ENCODE measurements at regions of chr9 and their contacts with region 1.

Region 1: DNA sequence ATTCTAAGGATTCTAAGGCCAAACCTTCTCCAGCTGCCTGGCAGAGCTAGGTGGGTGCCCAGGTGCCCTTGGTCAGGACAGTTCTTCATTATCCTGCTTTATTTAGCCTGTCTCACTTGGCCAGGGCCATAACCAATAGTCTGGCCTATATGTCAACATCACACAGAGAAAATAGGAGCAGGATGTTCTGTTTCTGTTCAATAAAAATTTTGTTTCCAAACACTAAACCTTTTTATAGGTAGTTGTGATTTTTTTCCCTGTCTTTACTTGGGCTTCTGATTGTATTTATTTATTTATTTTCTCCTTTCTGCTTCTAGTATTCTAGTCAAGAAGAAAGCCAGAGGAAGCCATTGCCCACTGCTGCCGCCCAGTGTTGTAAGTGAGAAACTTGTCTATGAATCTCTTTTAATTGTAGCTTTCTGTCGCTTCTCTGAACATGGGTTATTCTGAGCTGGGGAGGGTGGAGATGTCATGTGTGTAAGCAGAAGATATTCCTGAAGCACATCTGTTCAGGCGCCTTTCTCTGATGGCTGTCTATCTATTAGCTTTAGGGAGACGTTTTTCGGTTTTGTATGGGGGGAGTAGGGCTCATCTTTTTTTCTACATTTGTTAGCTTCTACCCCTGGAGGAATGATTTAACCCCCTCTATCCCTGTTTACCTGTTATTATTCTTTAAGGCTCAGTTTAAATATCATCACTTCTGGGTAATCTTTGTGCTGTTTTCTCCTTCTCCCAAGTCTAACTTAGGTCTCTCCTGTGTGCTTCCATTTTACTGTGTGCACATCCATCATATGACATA is 97.1 kb downstream of the UNC13B start:
- DNase-seq: peak; percentile 64
- ATAC-seq: peak; percentile 58
- H3K4me3 Mint-ChIP-seq: no peak overlapping the region
- H3K27ac Mint-ChIP-seq: no peak overlapping the region
- H3K4me1 Mint-ChIP-seq: peaks cover 12% of the 10 kb centered on the region
- H3K27me3 Mint-ChIP-seq: no peaks in the 10 kb centered on the region
- CTCF ChIP-seq: peak; percentile 29; the same call in 1 of the 2 replicates

Region 2: GRCh38 chr9:35026671-35027070 is 232.2 kb before region 1 on chr9:
- CTCF ChIA-PET with region 1: no interaction called
- POLR2A ChIA-PET with region 1: no interaction called
- DNase-seq: no peak
- ATAC-seq: no peak; the same call in 1 of the 2 replicates
- H3K4me3 Mint-ChIP-seq: no peak overlapping the region
- H3K27ac Mint-ChIP-seq: peak overlapping the region; percentile 72
- H3K4me1 Mint-ChIP-seq: peaks cover 37% of the 10 kb centered on the region
- H3K27me3 Mint-ChIP-seq: peaks cover 13% of the 10 kb centered on the region
- CTCF ChIP-seq: no peak

Region 3: GRCh38 chr9:35161713-35162604 is 96.9 kb before region 1 on chr9 and contains the start of gene UNC13B:
- CTCF ChIA-PET with region 1: interaction called, 20 read pairs
- POLR2A ChIA-PET with region 1: interaction called, 3 read pairs
- DNase-seq: peak; percentile 94
- ATAC-seq: peak; percentile 94
- H3K4me3 Mint-ChIP-seq: peak within 1 kb of the TSS; percentile 96
- H3K27ac Mint-ChIP-seq: peak within 1 kb of the TSS; percentile 99
- H3K4me1 Mint-ChIP-seq: peaks cover 42% of the 10 kb centered on the region
- H3K27me3 Mint-ChIP-seq: no peaks in the 10 kb centered on the region
- CTCF ChIP-seq: no peak
- total RNA-seq, gene UNC13B: 46.1 to 51.8 TPM (median 49.3 TPM) in 3 replicates

Region 4: GRCh38 chr9:35306283-35306682 is 47.4 kb after region 1 on chr9:
- CTCF ChIA-PET with region 1: no interaction called
- POLR2A ChIA-PET with region 1: no interaction called
- DNase-seq: no peak
- ATAC-seq: no peak
- H3K4me3 Mint-ChIP-seq: no peak overlapping the region
- H3K27ac Mint-ChIP-seq: no peak overlapping the region
- H3K4me1 Mint-ChIP-seq: no peaks in the 10 kb centered on the region
- H3K27me3 Mint-ChIP-seq: no peaks in the 10 kb centered on the region
- CTCF ChIP-seq: no peak

Region 5: GRCh38 chr9:35395076-35395705 is 136.3 kb after region 1 on chr9:
- CTCF ChIA-PET with region 1: no interaction called
- POLR2A ChIA-PET with region 1: no interaction called
- DNase-seq: no peak
- ATAC-seq: no peak
- H3K4me3 Mint-ChIP-seq: no peak overlapping the region
- H3K27ac Mint-ChIP-seq: no peak overlapping the region
- H3K4me1 Mint-ChIP-seq: no peaks in the 10 kb centered on the region
- H3K27me3 Mint-ChIP-seq: no peaks in the 10 kb centered on the region
- CTCF ChIP-seq: no peak

Measured in WTC11 (cell line).